ENCODE measurements at regions of chr6 and their contacts with region 1.

Region 1: GRCh38 chr6:166005944-166006899 is 161.4 kb downstream of the TBXT start:
- DNase-seq: no peak
- ATAC-seq: peak; percentile 44 to 48
- H3K4me3 ChIP-seq: peak overlapping the region; percentile 31 to 56 (median 44)
- H3K27ac ChIP-seq: peak overlapping the region; percentile 34 to 64 (median 56)
- H3K4me1 ChIP-seq: peaks cover 8 to 28% of the 10 kb centered on the region in 2 donors
- H3K27me3 ChIP-seq: peaks cover 39 to 53% (median 50%) of the 10 kb centered on the region in 3 donors
- CTCF ChIP-seq: no peak
- POLR2A ChIP-seq: no peak

Region 2: DNA sequence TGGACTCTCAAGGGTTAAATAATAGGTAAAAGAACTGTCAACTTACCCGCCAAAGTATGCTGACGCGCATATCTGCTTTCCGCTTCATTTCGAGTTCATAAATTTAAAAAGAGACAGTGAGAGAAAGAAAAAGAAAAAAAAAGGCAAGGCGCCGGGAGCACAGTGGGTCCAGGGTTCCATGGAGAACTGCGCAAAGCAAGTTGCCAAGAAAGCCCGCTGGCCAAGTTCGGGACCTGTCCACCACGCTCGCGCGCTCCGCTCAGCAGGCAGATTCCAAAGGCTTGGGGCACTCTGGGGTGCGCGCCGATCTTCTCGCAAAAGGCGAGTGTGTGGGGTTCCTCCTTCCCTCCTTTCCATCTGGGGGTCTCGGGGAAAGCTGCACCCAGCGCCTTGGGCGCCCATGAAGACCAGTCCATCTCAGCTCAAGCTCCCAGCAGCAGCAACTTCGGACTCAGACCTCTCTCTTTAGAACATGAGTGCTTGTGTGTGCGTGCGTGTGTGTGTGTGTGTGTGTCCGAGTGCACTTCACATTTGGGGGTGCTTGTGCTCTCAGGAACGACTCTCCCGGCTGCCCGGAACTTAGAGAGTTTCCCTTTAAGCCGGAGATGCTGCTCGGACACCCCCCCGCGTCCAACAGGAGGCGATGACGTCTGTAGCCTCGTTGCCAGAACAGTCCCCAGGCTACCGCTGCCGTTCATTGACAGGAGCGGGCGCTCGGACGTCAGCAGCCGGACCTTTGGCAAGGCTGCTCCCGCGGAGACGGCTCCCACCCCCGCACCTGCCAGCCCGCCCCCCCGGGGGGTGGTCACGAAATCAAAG is 18.5 kb before region 1 on chr6:
- in situ Hi-C with region 1: no loop called
- intact Hi-C with region 1: loop called (anchors 2 kb)
- DNase-seq: peak; percentile 16 to 41
- ATAC-seq: peak; percentile 48 to 51
- H3K4me3 ChIP-seq: peak overlapping the region; percentile 31 to 56 (median 49)
- H3K27ac ChIP-seq: peak overlapping the region in 1 of 4 donors; percentile 25
- H3K4me1 ChIP-seq: peaks cover 0 to 12% of the 10 kb centered on the region in 2 donors
- H3K27me3 ChIP-seq: peaks cover 21 to 36% (median 33%) of the 10 kb centered on the region in 3 donors
- CTCF ChIP-seq: no peak
- POLR2A ChIP-seq: no peak

Region 3: DNA sequence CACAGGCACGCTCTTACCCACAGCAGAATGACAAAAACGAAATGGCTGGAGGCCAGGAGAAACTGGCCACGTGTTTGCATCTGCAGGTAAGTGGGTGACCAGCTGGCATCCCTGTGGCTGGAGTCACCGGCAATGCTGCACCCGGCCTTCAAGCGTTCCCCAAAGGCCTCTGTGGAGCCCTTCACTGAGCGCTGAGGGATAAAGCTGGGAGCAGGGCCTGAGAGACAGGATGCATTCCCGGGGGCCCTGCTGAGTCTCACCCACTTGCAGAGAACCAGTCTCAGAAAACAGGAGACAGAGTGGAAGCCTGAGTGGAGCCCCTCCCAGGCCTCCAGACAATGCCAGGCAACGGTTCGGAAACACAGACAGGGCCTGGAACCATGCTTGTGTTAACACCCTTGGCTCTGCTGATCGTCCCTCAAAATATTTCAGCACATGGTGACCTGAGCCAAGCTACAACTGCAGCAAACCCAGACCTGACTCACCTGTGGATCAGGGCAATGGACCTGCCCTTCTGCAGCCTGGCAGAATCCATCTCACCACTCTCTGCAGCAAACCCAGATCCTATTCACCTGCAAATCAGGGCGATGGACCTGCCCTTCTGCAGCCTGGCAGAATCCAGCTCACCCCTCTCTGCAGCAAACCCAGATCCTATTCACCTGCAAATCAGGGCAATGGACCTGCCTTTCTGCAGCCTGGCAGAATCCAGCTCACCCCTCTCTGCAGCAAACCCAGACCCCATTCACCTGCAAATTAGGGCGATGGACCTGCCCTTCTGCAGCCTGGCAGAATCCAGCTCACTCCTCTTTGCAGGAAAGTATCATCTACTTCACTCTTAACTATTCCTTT is 121.6 kb after region 1 on chr6:
- in situ Hi-C with region 1: no loop called
- intact Hi-C with region 1: no loop called
- DNase-seq: no peak
- ATAC-seq: no peak
- H3K4me3 ChIP-seq: no peak overlapping the region
- H3K27ac ChIP-seq: no peak overlapping the region
- H3K4me1 ChIP-seq: no peaks in the 10 kb centered on the region
- H3K27me3 ChIP-seq: peaks cover 0 to 4% (median 0%) of the 10 kb centered on the region in 3 donors
- CTCF ChIP-seq: no peak
- POLR2A ChIP-seq: no peak

Measured in gastrocnemius medialis (tissue), 4 donors.